ENCODE measurements at regions of chr3 and their contacts with region 1.

Region 1: DNA sequence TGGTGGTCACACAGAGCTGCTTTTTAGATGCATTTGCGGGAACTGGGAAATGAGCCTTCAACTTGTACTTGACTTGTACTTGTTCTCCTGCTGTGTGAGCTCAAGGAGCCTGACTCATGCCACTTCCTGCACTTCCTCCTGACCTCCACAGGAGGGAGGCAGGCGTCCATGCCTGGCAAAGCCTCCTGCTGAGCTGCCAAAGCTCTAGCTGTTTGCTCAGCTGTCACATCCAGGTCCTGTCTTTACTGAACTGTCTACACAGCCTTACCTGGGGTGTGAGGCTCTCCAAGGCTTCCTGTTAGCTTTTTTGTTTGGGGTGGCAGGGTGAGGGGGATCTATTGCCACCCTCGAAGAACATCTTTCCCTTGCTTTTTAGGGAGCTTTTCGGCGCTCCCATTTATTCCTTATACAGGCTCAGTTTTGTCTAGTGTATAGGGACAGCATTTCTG is 6.4 kb downstream of the THPO start:
- DNase-seq: peak; percentile 92
- ATAC-seq: peak; percentile 94
- H3K4me3 ChIP-seq: no peak overlapping the region
- H3K27ac ChIP-seq: no peak overlapping the region
- H3K4me1 ChIP-seq: peaks cover 4% of the 10 kb centered on the region; the same call in 1 of the 2 replicates
- H3K27me3 ChIP-seq: peaks cover 18% of the 10 kb centered on the region
- CTCF ChIP-seq: peak; percentile 97

Region 2: DNA sequence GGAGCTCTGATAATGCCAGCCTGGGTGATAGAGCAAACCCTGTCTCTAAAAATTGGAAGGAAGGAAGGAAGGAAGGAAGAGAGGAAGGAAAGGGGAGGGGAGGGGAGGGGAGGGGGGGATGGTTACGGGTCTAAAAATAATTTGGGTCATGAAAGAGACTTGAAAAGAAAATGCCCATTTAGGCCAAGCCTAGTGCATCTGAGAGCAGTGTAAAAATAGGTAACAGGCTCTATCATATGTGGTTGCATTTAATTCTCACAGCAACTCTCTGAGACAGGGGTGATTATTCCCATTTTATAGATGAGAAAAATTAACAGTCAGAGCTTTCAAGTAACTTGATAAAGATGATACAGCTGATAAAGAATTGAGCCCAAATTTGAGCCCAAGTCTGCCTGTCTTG is 99.3 kb before region 1 on chr3:
- CTCF ChIA-PET with region 1: no interaction called
- POLR2A ChIA-PET with region 1: no interaction called
- intact Hi-C with region 1: no loop called
- DNase-seq: no peak
- ATAC-seq: no peak
- H3K4me3 ChIP-seq: no peak overlapping the region
- H3K27ac ChIP-seq: no peak overlapping the region
- H3K4me1 ChIP-seq: no peaks in the 10 kb centered on the region
- H3K27me3 ChIP-seq: peaks cover 3% of the 10 kb centered on the region; the same call in 1 of the 2 replicates
- CTCF ChIP-seq: no peak

Region 3: GRCh38 chr3:184399410-184399809 is 27.8 kb after region 1 on chr3:
- CTCF ChIA-PET with region 1: interaction called, 19 read pairs
- POLR2A ChIA-PET with region 1: no interaction called
- intact Hi-C with region 1: no loop called
- DNase-seq: peak; percentile 57
- ATAC-seq: peak; percentile 93
- H3K4me3 ChIP-seq: no peak overlapping the region
- H3K27ac ChIP-seq: no peak overlapping the region
- H3K4me1 ChIP-seq: no peaks in the 10 kb centered on the region
- H3K27me3 ChIP-seq: peaks cover 40% of the 10 kb centered on the region
- CTCF ChIP-seq: no peak

Region 4: DNA sequence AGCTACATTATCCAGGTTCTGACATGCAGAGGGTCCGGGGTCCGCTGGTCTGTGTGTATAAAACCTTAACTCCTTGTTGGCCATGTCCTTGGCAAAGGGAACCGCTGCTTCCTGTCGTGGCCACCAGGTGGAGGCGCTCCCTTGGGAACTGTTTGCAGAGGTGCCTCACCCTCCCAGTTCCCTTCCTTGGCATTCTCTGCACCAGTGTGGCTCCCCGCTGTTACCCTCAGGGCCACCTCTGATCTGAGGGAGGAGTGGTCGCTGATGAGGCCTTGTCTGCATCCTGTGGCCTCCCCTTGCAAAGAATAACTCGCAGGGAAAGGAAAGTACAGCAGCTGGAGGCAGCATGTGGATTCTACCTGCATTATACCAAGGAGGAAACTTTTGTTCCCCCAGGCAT is 97.8 kb after region 1 on chr3:
- CTCF ChIA-PET with region 1: interaction called, 19 read pairs
- POLR2A ChIA-PET with region 1: interaction called, 8 read pairs
- intact Hi-C with region 1: loop called (anchors 1 kb)
- DNase-seq: peak; percentile 66
- ATAC-seq: peak; percentile 85
- H3K4me3 ChIP-seq: no peak overlapping the region
- H3K27ac ChIP-seq: no peak overlapping the region
- H3K4me1 ChIP-seq: no peaks in the 10 kb centered on the region
- H3K27me3 ChIP-seq: peaks cover 36% of the 10 kb centered on the region
- CTCF ChIP-seq: peak; percentile 93

Region 5: GRCh38 chr3:184543843-184544512 is 172.4 kb after region 1 on chr3:
- CTCF ChIA-PET with region 1: interaction called, 13 read pairs
- POLR2A ChIA-PET with region 1: no interaction called
- intact Hi-C with region 1: loop called (anchors 1 kb)
- DNase-seq: peak; percentile 96
- ATAC-seq: peak; percentile 85
- H3K4me3 ChIP-seq: no peak overlapping the region
- H3K27ac ChIP-seq: no peak overlapping the region
- H3K4me1 ChIP-seq: no peaks in the 10 kb centered on the region
- H3K27me3 ChIP-seq: peaks cover 23% of the 10 kb centered on the region
- CTCF ChIP-seq: peak; percentile 89

Region 6: GRCh38 chr3:184611607-184612281 is 240.2 kb after region 1 on chr3:
- CTCF ChIA-PET with region 1: no interaction called
- POLR2A ChIA-PET with region 1: no interaction called
- intact Hi-C with region 1: no loop called
- DNase-seq: no peak
- ATAC-seq: no peak
- H3K4me3 ChIP-seq: no peak overlapping the region
- H3K27ac ChIP-seq: no peak overlapping the region
- H3K4me1 ChIP-seq: no peaks in the 10 kb centered on the region; the same call in 1 of the 2 replicates
- H3K27me3 ChIP-seq: no peaks in the 10 kb centered on the region
- CTCF ChIP-seq: no peak

Region 7: GRCh38 chr3:184672977-184673870 is 301.6 kb after region 1 on chr3:
- CTCF ChIA-PET with region 1: no interaction called
- POLR2A ChIA-PET with region 1: no interaction called
- intact Hi-C with region 1: no loop called
- DNase-seq: no peak
- ATAC-seq: no peak
- H3K4me3 ChIP-seq: no peak overlapping the region
- H3K27ac ChIP-seq: no peak overlapping the region
- H3K4me1 ChIP-seq: no peaks in the 10 kb centered on the region
- H3K27me3 ChIP-seq: no peaks in the 10 kb centered on the region
- CTCF ChIP-seq: no peak

Measured in PC-3 (cell line).